CD4-positive, alpha-beta memory T cell (primary cell): ENCODE measurements at regions of chr15 and their contacts with region 1.

Region 1: DNA sequence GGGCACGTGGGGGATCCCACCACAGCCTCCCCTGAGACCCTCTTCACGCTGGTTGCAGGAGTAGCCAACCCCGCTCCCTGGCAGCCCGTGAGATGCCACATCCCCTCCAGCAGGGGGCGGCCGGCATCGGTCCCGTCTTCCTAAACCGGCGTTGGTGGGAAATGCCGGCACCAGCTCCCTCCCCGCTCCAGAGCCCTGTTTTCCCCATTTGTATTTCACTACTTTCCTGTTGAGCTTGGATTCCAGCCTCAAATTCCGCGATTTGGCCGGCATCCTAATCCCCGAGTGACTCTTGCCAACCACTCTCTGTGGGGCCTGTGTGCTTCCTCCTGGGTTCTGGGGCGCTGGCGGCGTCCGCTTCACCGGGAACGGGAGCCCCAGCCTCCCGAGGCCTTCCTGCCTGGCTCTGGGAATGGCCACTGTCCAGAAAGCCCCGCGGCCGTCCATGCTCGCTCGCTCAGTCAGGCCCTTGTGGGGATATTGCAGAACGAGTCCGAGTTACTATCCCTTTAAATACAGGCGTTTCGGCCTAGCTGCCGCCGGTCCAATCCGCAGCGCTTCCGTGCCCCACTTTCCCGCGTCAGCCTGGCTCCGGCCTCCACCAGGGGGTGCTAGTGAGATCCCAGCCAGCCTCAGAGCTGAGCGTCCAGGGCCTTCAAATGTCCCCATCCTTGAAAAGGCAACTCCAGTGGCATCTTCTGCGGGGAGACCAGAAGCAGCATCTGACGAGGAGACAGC is 8.1 kb upstream of the ADAMTS17 start:
- DNase-seq: peak; percentile 82 to 87 (median 83)
- H3K4me3 ChIP-seq: peak overlapping the region; percentile 70 to 98
- H3K4me3 Mint-ChIP-seq: peak overlapping the region; percentile 95 to 97 (median 96)
- H3K27ac ChIP-seq: peak overlapping the region; percentile 85
- H3K27ac Mint-ChIP-seq: peak overlapping the region; percentile 81 to 98 (median 93)
- H3K4me1 ChIP-seq: peaks cover 5% of the 10 kb centered on the region
- H3K4me1 Mint-ChIP-seq: peaks cover 6 to 18% (median 10%) of the 10 kb centered on the region in 4 donors
- H3K27me3 ChIP-seq: peaks cover 7% of the 10 kb centered on the region
- H3K27me3 Mint-ChIP-seq: peaks cover 13 to 24% of the 10 kb centered on the region in 2 donors

Region 2: DNA sequence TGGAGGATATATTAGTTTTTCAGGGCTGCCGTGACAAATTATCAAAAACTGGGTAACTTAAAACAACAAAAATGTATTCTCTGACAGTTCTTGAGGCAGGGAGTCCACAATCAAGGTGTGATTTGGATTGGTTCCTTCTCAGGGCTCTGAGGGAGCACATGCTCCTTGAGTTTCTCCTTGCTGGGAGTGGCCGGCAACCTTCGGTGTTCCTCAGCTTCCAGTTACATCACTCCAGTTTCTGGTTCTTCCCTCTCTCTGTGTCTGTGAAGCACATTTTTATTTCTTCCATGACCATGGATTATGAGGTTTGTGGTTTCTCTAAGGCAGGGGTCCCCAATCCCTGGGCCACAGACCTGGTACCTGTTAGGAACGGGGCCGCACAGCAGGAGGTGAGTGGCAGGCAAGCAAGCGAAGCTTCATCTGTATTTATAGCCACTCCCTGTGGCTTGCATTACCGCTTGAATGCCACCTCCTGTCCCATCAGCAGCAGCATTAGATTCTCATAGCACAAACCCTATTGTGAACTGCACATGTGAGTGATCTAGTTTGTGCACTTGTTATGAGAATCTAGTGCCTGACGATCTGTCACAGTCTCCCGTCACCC is 1074.2 kb before region 1 on chr15:
- CTCF ChIA-PET with region 1: interaction called, 10 read pairs
- POLR2A ChIA-PET with region 1: no interaction called
- intact Hi-C with region 1: no loop called
- DNase-seq: no peak
- H3K4me3 ChIP-seq: no peak overlapping the region
- H3K4me3 Mint-ChIP-seq: no peak overlapping the region
- H3K27ac ChIP-seq: no peak overlapping the region
- H3K27ac Mint-ChIP-seq: no peak overlapping the region
- H3K4me1 ChIP-seq: no peaks in the 10 kb centered on the region
- H3K4me1 Mint-ChIP-seq: peaks cover 7 to 14% (median 13%) of the 10 kb centered on the region in 4 donors
- H3K27me3 ChIP-seq: no peaks in the 10 kb centered on the region
- H3K27me3 Mint-ChIP-seq: no peaks in the 10 kb centered on the region

Region 3: GRCh38 chr15:100111103-100112060 is 238.5 kb before region 1 on chr15:
- CTCF ChIA-PET with region 1: no interaction called
- POLR2A ChIA-PET with region 1: no interaction called
- intact Hi-C with region 1: no loop called
- DNase-seq: peak in 2 of 5 donors; percentile 7 to 11
- H3K4me3 ChIP-seq: no peak overlapping the region
- H3K4me3 Mint-ChIP-seq: peak overlapping the region; percentile 42 to 86 (median 72)
- H3K27ac ChIP-seq: peak overlapping the region; percentile 26
- H3K27ac Mint-ChIP-seq: peak overlapping the region; percentile 56 to 91 (median 88)
- H3K4me1 ChIP-seq: peaks cover 20% of the 10 kb centered on the region
- H3K4me1 Mint-ChIP-seq: peaks cover 8 to 41% (median 19%) of the 10 kb centered on the region in 4 donors
- H3K27me3 ChIP-seq: no peaks in the 10 kb centered on the region
- H3K27me3 Mint-ChIP-seq: no peaks in the 10 kb centered on the region

Region 4: GRCh38 chr15:100330629-100331215 is 19.1 kb before region 1 on chr15:
- CTCF ChIA-PET with region 1: interaction called, 151 read pairs
- POLR2A ChIA-PET with region 1: interaction called, 12 read pairs
- intact Hi-C with region 1: no loop called
- DNase-seq: peak; percentile 56 to 77 (median 69)
- H3K4me3 ChIP-seq: peak overlapping the region in 1 of 2 donors; percentile 27
- H3K4me3 Mint-ChIP-seq: peak overlapping the region; percentile 64 to 86 (median 72)
- H3K27ac ChIP-seq: peak overlapping the region; percentile 27
- H3K27ac Mint-ChIP-seq: peak overlapping the region; percentile 13 to 76 (median 64)
- H3K4me1 ChIP-seq: peaks cover 62% of the 10 kb centered on the region
- H3K4me1 Mint-ChIP-seq: peaks cover 40 to 80% (median 60%) of the 10 kb centered on the region in 4 donors
- H3K27me3 ChIP-seq: no peaks in the 10 kb centered on the region
- H3K27me3 Mint-ChIP-seq: no peaks in the 10 kb centered on the region

Region 5: DNA sequence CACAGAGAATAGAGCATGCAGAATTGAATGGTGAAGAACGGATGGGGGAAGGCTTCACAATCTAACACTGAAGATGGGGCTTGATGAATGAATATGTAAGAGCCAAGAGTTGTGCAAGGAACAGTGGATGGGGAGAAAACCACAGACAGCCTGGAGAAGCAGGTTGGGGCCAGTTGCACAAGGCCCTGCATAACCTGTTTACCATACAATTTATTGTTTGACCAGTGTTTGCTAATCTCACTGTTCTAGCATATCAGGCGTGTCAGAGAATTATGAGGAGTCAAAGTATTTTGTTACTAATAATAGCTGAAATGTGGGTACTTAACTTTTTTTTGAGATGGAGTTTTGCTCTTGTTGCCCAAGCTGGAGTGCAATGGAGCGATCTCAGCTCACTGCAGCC is 215.7 kb after region 1 on chr15:
- CTCF ChIA-PET with region 1: interaction called, 214 read pairs
- POLR2A ChIA-PET with region 1: no interaction called
- intact Hi-C with region 1: no loop called
- DNase-seq: no peak
- H3K4me3 ChIP-seq: no peak overlapping the region
- H3K4me3 Mint-ChIP-seq: no peak overlapping the region
- H3K27ac ChIP-seq: no peak overlapping the region
- H3K27ac Mint-ChIP-seq: peak overlapping the region in 4 of 7 donors; percentile 2 to 39 (median 15)
- H3K4me1 ChIP-seq: peaks cover 7% of the 10 kb centered on the region
- H3K4me1 Mint-ChIP-seq: peaks cover 14 to 21% (median 17%) of the 10 kb centered on the region in 4 donors
- H3K27me3 ChIP-seq: no peaks in the 10 kb centered on the region
- H3K27me3 Mint-ChIP-seq: no peaks in the 10 kb centered on the region

Region 6: DNA sequence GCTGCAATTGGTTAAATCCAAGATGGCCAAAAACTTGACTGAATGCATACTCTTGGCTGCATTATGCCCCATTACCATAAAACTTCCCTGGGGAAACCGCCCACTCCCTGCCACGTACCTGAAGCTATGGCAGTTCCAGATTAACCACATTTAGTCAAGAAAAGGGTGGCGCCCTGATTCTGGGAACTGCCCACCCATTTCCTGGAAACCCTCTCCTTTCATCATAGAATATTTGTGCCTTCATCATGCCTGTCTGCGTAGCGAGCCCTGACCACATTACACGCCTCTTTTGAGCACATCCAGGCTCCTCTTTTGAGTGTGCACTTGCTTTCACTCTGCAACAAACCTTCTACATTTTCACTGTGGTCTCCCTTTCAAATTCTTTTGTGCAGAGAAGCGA is 246.9 kb after region 1 on chr15:
- CTCF ChIA-PET with region 1: interaction called, 50 read pairs
- POLR2A ChIA-PET with region 1: interaction called, 18 read pairs
- intact Hi-C with region 1: no loop called
- DNase-seq: peak; percentile 88 to 95 (median 92)
- H3K4me3 ChIP-seq: peak overlapping the region; percentile 48 to 59
- H3K4me3 Mint-ChIP-seq: peak overlapping the region; percentile 75 to 91 (median 86)
- H3K27ac ChIP-seq: peak overlapping the region; percentile 77
- H3K27ac Mint-ChIP-seq: peak overlapping the region in 6 of 7 donors; percentile 90 to 98 (median 96)
- H3K4me1 ChIP-seq: peaks cover 87% of the 10 kb centered on the region
- H3K4me1 Mint-ChIP-seq: peaks cover 52 to 71% (median 58%) of the 10 kb centered on the region in 4 donors
- H3K27me3 ChIP-seq: no peaks in the 10 kb centered on the region
- H3K27me3 Mint-ChIP-seq: no peaks in the 10 kb centered on the region